ENCODE measurements at regions of chr7 and their contacts with region 1.

Region 1: GRCh38 chr7:23055582-23056178 is 41.8 kb upstream of the HYCC1 start:
- DNase-seq: peak; percentile 62
- H3K4me3 Mint-ChIP-seq: no peak overlapping the region
- H3K27ac Mint-ChIP-seq: no peak overlapping the region
- H3K4me1 Mint-ChIP-seq: peaks cover 5% of the 10 kb centered on the region
- H3K27me3 Mint-ChIP-seq: peaks cover 3% of the 10 kb centered on the region

Region 2: GRCh38 chr7:22559829-22560489 is 495.7 kb before region 1 on chr7:
- CTCF ChIA-PET with region 1: interaction called, 63 read pairs
- POLR2A ChIA-PET with region 1: interaction called, 3 read pairs
- intact Hi-C with region 1: loop called (anchors 1 kb)
- DNase-seq: peak; percentile 77
- H3K4me3 Mint-ChIP-seq: no peak overlapping the region
- H3K27ac Mint-ChIP-seq: no peak overlapping the region
- H3K4me1 Mint-ChIP-seq: peaks cover 39% of the 10 kb centered on the region
- H3K27me3 Mint-ChIP-seq: peaks cover 9% of the 10 kb centered on the region

Region 3: DNA sequence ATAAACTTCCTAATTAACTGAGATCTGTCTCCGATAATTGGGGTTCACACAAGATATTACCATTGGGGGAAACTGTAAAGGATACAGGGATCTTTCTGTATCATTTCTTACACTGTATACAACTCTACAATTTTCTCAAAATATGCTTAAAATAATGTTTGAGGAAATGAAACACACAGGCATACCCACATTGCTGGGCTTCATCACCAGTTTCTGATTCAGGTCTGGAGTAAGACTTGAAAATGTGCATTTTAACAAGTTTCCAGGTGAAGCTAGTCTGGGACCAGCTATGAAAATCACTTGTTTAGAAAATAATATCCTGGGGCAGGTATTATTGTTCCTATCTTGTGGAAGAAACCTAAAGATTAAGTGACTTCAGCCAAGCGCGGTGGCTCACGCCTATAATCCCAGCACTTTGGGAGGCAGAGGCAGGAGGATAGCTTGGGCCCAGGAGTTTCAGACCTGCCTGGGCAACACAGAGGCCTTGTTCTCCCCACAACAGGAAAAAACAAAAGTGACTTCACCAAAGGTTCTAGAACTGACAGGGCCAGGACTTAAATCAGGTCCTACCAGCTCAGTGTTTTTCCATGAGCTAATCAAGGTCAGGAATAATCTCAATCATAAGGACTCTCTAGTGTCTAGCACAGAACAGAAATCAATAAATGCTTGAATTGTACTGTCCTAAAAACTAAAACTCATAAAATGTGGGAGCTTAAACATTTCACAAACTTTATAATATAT is 245.6 kb before region 1 on chr7:
- CTCF ChIA-PET with region 1: interaction called, 10 read pairs
- POLR2A ChIA-PET with region 1: no interaction called
- intact Hi-C with region 1: no loop called
- DNase-seq: no peak
- H3K4me3 Mint-ChIP-seq: no peak overlapping the region
- H3K27ac Mint-ChIP-seq: peak overlapping the region; percentile 13
- H3K4me1 Mint-ChIP-seq: peaks cover 2% of the 10 kb centered on the region
- H3K27me3 Mint-ChIP-seq: no peaks in the 10 kb centered on the region

Region 4: DNA sequence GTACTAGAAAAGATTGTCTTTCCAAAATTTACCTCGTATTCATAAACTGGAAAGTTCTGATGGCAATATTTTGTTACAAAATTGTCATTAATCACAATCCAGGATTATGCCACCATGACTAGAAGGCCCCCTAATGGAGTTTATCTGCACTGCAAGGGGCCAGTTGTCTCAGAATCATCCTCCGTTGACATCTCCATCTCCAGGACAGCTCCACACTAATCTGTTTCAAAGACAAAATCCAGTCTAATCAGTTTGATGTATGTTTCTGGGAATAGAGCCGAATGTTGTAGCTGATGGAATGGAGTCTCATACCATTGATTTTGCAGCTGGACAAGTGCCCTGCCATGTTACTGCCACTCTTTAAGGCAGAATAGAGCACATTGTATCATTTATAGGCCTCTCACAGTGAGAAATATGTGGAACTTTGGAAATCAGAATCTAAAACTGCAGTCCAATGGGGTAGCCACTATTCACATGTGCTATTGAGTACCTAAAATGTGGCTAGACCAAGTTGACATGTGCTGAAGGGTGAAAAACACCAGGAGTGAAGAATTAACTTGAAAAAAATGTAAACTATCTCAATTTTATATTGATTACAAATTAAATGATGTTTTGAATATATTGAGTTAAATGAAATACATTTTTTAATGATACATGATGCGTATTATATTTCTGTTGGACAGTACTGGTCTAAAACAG is 194.7 kb before region 1 on chr7:
- CTCF ChIA-PET with region 1: interaction called, 24 read pairs
- POLR2A ChIA-PET with region 1: interaction called, 3 read pairs
- intact Hi-C with region 1: no loop called
- DNase-seq: peak; percentile 29
- H3K4me3 Mint-ChIP-seq: no peak overlapping the region
- H3K27ac Mint-ChIP-seq: no peak overlapping the region
- H3K4me1 Mint-ChIP-seq: peaks cover 37% of the 10 kb centered on the region
- H3K27me3 Mint-ChIP-seq: no peaks in the 10 kb centered on the region

Region 5: DNA sequence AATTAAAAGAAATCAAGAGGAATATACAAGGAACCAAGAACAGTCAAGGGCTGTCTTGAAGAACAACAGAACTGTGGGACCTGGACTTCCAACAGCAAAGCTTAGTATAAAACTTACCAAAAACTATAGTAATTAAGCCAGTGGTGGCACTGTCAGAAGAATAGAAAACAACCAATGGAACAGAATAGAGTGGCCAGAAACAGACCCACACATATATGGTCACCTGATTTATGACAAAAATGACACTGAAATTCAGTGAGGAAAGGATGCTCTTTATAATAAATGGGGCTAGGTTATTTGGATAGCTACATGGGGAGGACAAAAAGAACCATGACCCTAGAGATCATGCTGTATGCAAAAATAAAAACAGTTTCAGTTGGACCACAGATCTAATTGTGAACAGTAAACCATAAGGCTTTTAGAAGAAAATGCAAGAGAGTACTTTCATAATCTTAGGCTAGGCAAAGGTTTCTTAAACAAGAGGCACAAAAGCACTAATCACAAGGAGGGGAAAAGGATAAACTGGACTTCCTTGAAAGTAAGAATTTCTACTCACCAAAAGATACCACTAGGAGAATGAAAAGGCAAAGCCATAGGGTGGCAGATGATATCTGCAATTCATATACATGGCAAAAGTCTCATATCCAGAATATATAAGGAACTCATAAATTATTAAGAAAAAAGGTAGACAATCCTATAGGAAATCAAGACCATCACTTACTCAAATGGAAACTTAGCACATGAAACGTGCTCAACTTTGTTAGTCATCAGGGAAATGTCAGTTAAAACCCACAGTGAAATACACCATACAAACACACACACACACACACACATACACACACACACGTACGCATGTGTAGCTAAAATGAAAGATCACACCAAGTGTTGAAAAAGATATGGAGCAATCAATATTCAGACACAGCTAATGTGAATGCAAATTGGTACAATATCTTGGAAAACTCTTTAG is 62.5 kb before region 1 on chr7:
- CTCF ChIA-PET with region 1: interaction called, 15 read pairs
- POLR2A ChIA-PET with region 1: no interaction called
- intact Hi-C with region 1: no loop called
- DNase-seq: peak; percentile 48
- H3K4me3 Mint-ChIP-seq: no peak overlapping the region
- H3K27ac Mint-ChIP-seq: no peak overlapping the region
- H3K4me1 Mint-ChIP-seq: peaks cover 41% of the 10 kb centered on the region
- H3K27me3 Mint-ChIP-seq: no peaks in the 10 kb centered on the region

Region 6: GRCh38 chr7:23043441-23043840 is 12.2 kb before region 1 on chr7:
- CTCF ChIA-PET with region 1: interaction called, 27 read pairs
- POLR2A ChIA-PET with region 1: no interaction called
- intact Hi-C with region 1: no loop called
- DNase-seq: no peak
- H3K4me3 Mint-ChIP-seq: no peak overlapping the region
- H3K27ac Mint-ChIP-seq: no peak overlapping the region
- H3K4me1 Mint-ChIP-seq: no peaks in the 10 kb centered on the region
- H3K27me3 Mint-ChIP-seq: no peaks in the 10 kb centered on the region

Region 7: GRCh38 chr7:23277359-23277989 is 221.8 kb after region 1 on chr7:
- CTCF ChIA-PET with region 1: no interaction called
- POLR2A ChIA-PET with region 1: no interaction called
- intact Hi-C with region 1: no loop called
- DNase-seq: no peak
- H3K4me3 Mint-ChIP-seq: no peak overlapping the region
- H3K27ac Mint-ChIP-seq: no peak overlapping the region
- H3K4me1 Mint-ChIP-seq: peaks cover 9% of the 10 kb centered on the region
- H3K27me3 Mint-ChIP-seq: no peaks in the 10 kb centered on the region

Measured in activated CD4-positive, alpha-beta memory T cell treated with anti-CD3 and anti-CD28 coated beads for 36 hours (primary cell).